ENCODE measurements at regions of chr1 and their contacts with region 1.

Region 1: GRCh38 chr1:168342572-168343280 is 62.0 kb downstream of the TBX19 start:
- DNase-seq: peak; percentile 92
- ATAC-seq: peak; percentile 98
- H3K4me3 Mint-ChIP-seq: no peak overlapping the region
- H3K27ac Mint-ChIP-seq: peak overlapping the region; percentile 77
- H3K4me1 Mint-ChIP-seq: peaks cover 62% of the 10 kb centered on the region
- H3K27me3 Mint-ChIP-seq: no peaks in the 10 kb centered on the region

Region 2: GRCh38 chr1:168225476-168226190 is 117.1 kb before region 1 on chr1 and contains the start of gene SFT2D2:
- CTCF ChIA-PET with region 1: interaction called, 13 read pairs
- POLR2A ChIA-PET with region 1: no interaction called
- DNase-seq: peak; percentile 84
- ATAC-seq: peak; percentile 98
- H3K4me3 Mint-ChIP-seq: peak within 1 kb of the TSS; percentile 86
- H3K27ac Mint-ChIP-seq: peak within 1 kb of the TSS; percentile 82
- H3K4me1 Mint-ChIP-seq: peaks cover 46% of the 10 kb centered on the region
- H3K27me3 Mint-ChIP-seq: peaks cover 3% of the 10 kb centered on the region
- total RNA-seq, gene SFT2D2: 60.2 to 65.6 TPM

Region 3: GRCh38 chr1:168328731-168329399 is 13.9 kb before region 1 on chr1:
- CTCF ChIA-PET with region 1: interaction called, 52 read pairs
- POLR2A ChIA-PET with region 1: no interaction called
- DNase-seq: no peak
- ATAC-seq: no peak
- H3K4me3 Mint-ChIP-seq: no peak overlapping the region
- H3K27ac Mint-ChIP-seq: no peak overlapping the region
- H3K4me1 Mint-ChIP-seq: no peaks in the 10 kb centered on the region
- H3K27me3 Mint-ChIP-seq: no peaks in the 10 kb centered on the region

Region 4: DNA sequence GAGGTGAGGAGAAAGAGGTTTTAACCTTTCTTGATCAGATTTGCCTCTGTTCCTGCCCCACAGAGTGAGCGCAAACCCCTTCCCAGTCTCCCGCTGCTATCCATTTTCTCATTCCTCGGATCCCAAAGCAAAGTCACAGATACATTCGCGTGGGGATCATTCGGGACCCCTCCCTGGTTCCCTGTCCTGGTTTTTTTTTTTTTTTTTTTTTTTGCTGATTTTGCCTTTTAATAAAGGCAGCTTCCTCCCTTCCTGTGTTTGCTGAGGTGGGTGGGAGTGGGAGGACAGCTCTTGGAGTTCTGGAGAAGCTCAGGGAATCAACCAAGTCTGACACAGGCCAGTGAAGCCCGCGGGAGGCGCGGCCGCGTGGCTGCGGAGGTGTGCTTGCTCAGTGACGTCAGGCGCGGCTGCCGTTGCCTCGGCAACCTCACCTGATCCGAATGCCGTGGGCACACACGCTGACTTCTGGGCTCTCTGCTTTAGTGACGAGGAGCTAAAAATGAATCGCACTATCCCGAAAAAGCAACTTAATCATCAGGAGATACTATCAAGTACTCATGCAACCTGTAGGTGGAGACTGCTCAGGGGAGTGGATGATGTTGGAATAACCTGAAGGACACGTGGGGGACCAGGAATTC is 44.3 kb after region 1 on chr1:
- CTCF ChIA-PET with region 1: interaction called, 24 read pairs
- POLR2A ChIA-PET with region 1: no interaction called
- DNase-seq: peak; percentile 75
- ATAC-seq: peak; percentile 96
- H3K4me3 Mint-ChIP-seq: peak overlapping the region; percentile 32
- H3K27ac Mint-ChIP-seq: peak overlapping the region; percentile 54
- H3K4me1 Mint-ChIP-seq: peaks cover 18% of the 10 kb centered on the region
- H3K27me3 Mint-ChIP-seq: peaks cover 11% of the 10 kb centered on the region

Region 5: GRCh38 chr1:168421399-168422004 is 78.8 kb after region 1 on chr1:
- CTCF ChIA-PET with region 1: interaction called, 35 read pairs
- POLR2A ChIA-PET with region 1: no interaction called
- DNase-seq: peak; percentile 52
- ATAC-seq: peak; percentile 89
- H3K4me3 Mint-ChIP-seq: peak overlapping the region; percentile 29
- H3K27ac Mint-ChIP-seq: peak overlapping the region; percentile 89
- H3K4me1 Mint-ChIP-seq: peaks cover 34% of the 10 kb centered on the region
- H3K27me3 Mint-ChIP-seq: no peaks in the 10 kb centered on the region

Region 6: GRCh38 chr1:168509875-168510791 is 167.4 kb after region 1 on chr1:
- CTCF ChIA-PET with region 1: interaction called, 12 read pairs
- POLR2A ChIA-PET with region 1: interaction called, 3 read pairs
- DNase-seq: peak; percentile 57
- ATAC-seq: peak; percentile 35
- H3K4me3 Mint-ChIP-seq: peak overlapping the region; percentile 1
- H3K27ac Mint-ChIP-seq: peak overlapping the region; percentile 94
- H3K4me1 Mint-ChIP-seq: peaks cover 95% of the 10 kb centered on the region
- H3K27me3 Mint-ChIP-seq: no peaks in the 10 kb centered on the region

Region 7: GRCh38 chr1:168613691-168614231 is 271.0 kb after region 1 on chr1:
- CTCF ChIA-PET with region 1: no interaction called
- POLR2A ChIA-PET with region 1: no interaction called
- DNase-seq: no peak
- ATAC-seq: no peak
- H3K4me3 Mint-ChIP-seq: no peak overlapping the region
- H3K27ac Mint-ChIP-seq: no peak overlapping the region
- H3K4me1 Mint-ChIP-seq: no peaks in the 10 kb centered on the region
- H3K27me3 Mint-ChIP-seq: peaks cover 6% of the 10 kb centered on the region

Region 8: DNA sequence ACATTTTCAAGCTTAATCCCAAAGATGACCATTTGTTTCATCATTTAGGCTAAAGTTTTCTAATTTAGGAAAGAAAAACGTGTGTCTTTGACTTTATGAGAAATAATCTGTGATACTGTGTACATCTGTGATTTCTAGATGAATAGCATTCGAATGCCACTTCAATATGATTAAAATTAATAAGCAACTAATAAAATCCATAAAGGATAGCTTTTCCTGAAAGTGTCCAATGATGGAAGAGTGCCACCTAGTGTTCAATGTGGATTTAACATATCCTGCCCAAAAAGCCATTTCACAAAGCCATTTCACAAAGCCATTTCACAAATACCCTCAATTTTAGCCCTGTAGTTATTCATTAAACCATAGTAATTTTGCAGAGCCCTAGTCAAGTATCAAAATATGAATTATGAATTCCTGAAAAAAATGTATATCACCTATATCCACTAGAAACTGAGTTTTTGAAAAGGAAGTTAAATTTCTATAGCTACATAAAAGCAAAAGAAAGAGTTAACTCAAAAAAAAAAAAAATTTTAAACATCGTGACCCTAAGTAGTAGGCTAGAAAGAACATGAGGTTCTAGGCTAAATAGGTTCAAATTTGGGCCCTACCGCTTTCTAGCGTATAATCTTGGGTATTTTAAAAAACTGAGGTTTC is 1005.8 kb after region 1 on chr1:
- CTCF ChIA-PET with region 1: interaction called, 55 read pairs
- POLR2A ChIA-PET with region 1: no interaction called
- DNase-seq: peak; percentile 46
- ATAC-seq: no peak
- H3K4me3 Mint-ChIP-seq: no peak overlapping the region
- H3K27ac Mint-ChIP-seq: no peak overlapping the region
- H3K4me1 Mint-ChIP-seq: peaks cover 18% of the 10 kb centered on the region
- H3K27me3 Mint-ChIP-seq: no peaks in the 10 kb centered on the region

Measured in activated CD8-positive, alpha-beta T cell treated with anti-CD3 and anti-CD28 coated beads, Interleukin-2, amount 10 ng/mL, durations not matched to agents 7 days and 5 days (primary cell).